ENCODE measurements at regions of chr7 and their contacts with region 1.

Region 1: DNA sequence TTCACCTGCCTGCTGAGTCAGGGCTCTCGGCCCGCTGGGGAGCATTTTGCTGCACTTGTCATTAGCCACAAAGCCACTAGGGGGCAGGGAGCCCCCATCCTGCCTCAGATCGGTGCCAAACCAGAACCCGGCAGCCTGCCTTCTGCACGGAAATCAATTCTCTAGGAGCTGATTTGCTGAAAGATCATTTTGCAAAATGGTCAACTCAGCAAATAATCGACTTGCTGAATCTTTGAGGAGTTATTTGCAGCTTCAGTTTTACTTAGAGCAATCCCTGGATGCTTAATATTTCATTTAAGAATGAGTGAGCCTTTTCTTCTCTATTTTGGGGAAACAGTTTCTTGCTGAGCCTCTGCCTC is 1.7 kb upstream of the GIMAP8 start:
- DNase-seq: peak; percentile 88 to 91 (median 89)
- H3K4me3 ChIP-seq: peak overlapping the region in 1 of 2 donors; percentile 36
- H3K4me3 Mint-ChIP-seq: peak overlapping the region; percentile 78 to 100 (median 100)
- H3K27ac ChIP-seq: peak overlapping the region; percentile 84
- H3K27ac Mint-ChIP-seq: peak overlapping the region; percentile 84 to 98 (median 96)
- H3K4me1 ChIP-seq: peaks cover 51% of the 10 kb centered on the region
- H3K4me1 Mint-ChIP-seq: peaks cover 34 to 64% (median 46%) of the 10 kb centered on the region in 4 donors
- H3K27me3 ChIP-seq: no peaks in the 10 kb centered on the region
- H3K27me3 Mint-ChIP-seq: no peaks in the 10 kb centered on the region

Region 2: GRCh38 chr7:150481186-150481920 is 32.6 kb after region 1 on chr7:
- CTCF ChIA-PET with region 1: interaction called, 47 read pairs
- POLR2A ChIA-PET with region 1: interaction called, 1,079 read pairs
- intact Hi-C with region 1: loop called (anchors 2 kb)
- DNase-seq: peak; percentile 63 to 87 (median 69)
- H3K4me3 ChIP-seq: peak overlapping the region in 1 of 2 donors; percentile 37
- H3K4me3 Mint-ChIP-seq: peak overlapping the region; percentile 80 to 90 (median 88)
- H3K27ac ChIP-seq: peak overlapping the region; percentile 71
- H3K27ac Mint-ChIP-seq: peak overlapping the region; percentile 96 to 100 (median 99)
- H3K4me1 ChIP-seq: peaks cover 99% of the 10 kb centered on the region
- H3K4me1 Mint-ChIP-seq: peaks cover 75 to 98% (median 91%) of the 10 kb centered on the region in 4 donors
- H3K27me3 ChIP-seq: no peaks in the 10 kb centered on the region
- H3K27me3 Mint-ChIP-seq: no peaks in the 10 kb centered on the region

Region 3: GRCh38 chr7:150556521-150557138 is 107.9 kb after region 1 on chr7:
- CTCF ChIA-PET with region 1: interaction called, 25 read pairs
- POLR2A ChIA-PET with region 1: interaction called, 68 read pairs
- intact Hi-C with region 1: no loop called
- DNase-seq: peak in 4 of 5 donors; percentile 53 to 76 (median 72)
- H3K4me3 ChIP-seq: peak overlapping the region in 1 of 2 donors; percentile 4
- H3K4me3 Mint-ChIP-seq: peak overlapping the region; percentile 34 to 87 (median 78)
- H3K27ac ChIP-seq: peak overlapping the region; percentile 40
- H3K27ac Mint-ChIP-seq: peak overlapping the region; percentile 79 to 96 (median 94)
- H3K4me1 ChIP-seq: peaks cover 64% of the 10 kb centered on the region
- H3K4me1 Mint-ChIP-seq: peaks cover 53 to 87% (median 72%) of the 10 kb centered on the region in 4 donors
- H3K27me3 ChIP-seq: no peaks in the 10 kb centered on the region
- H3K27me3 Mint-ChIP-seq: no peaks in the 10 kb centered on the region

Region 4: DNA sequence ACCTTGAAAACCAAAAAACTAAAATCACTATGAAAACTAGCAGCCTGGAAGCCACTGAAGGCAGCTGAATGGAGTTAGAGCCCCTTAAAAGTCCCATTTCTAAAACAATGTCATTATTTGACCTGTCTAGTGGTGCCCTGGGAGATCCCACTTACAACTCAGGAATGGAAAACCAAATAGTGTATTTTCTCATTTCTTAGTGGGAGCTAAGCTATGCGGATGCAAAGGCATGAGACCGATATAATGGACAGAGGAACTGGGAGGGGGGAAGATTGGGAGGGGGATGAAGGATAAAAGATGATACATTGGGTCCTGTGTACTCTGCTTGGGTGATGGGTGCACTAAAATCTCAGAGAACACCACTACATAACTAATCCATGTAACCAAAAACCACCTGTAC is 226.9 kb after region 1 on chr7:
- CTCF ChIA-PET with region 1: interaction called, 4 read pairs
- POLR2A ChIA-PET with region 1: interaction called, 43 read pairs
- intact Hi-C with region 1: loop called (anchors 2 kb)
- DNase-seq: no peak
- H3K4me3 ChIP-seq: no peak overlapping the region
- H3K4me3 Mint-ChIP-seq: peak overlapping the region; percentile 39 to 89 (median 61)
- H3K27ac ChIP-seq: peak overlapping the region; percentile 18
- H3K27ac Mint-ChIP-seq: peak overlapping the region; percentile 26 to 92 (median 86)
- H3K4me1 ChIP-seq: peaks cover 75% of the 10 kb centered on the region
- H3K4me1 Mint-ChIP-seq: peaks cover 55 to 87% (median 70%) of the 10 kb centered on the region in 4 donors
- H3K27me3 ChIP-seq: no peaks in the 10 kb centered on the region
- H3K27me3 Mint-ChIP-seq: no peaks in the 10 kb centered on the region

Region 5: GRCh38 chr7:150731916-150732315 is 283.1 kb after region 1 on chr7:
- CTCF ChIA-PET with region 1: interaction called, 15 read pairs
- POLR2A ChIA-PET with region 1: interaction called, 117 read pairs
- intact Hi-C with region 1: loop called (anchors 1 kb)
- DNase-seq: no peak
- H3K4me3 ChIP-seq: no peak overlapping the region
- H3K4me3 Mint-ChIP-seq: peak overlapping the region; percentile 9 to 95 (median 64)
- H3K27ac ChIP-seq: peak overlapping the region; percentile 6
- H3K27ac Mint-ChIP-seq: peak overlapping the region; percentile 86 to 97 (median 91)
- H3K4me1 ChIP-seq: peaks cover 76% of the 10 kb centered on the region
- H3K4me1 Mint-ChIP-seq: peaks cover 71 to 87% (median 76%) of the 10 kb centered on the region in 4 donors
- H3K27me3 ChIP-seq: no peaks in the 10 kb centered on the region
- H3K27me3 Mint-ChIP-seq: no peaks in the 10 kb centered on the region

Region 6: DNA sequence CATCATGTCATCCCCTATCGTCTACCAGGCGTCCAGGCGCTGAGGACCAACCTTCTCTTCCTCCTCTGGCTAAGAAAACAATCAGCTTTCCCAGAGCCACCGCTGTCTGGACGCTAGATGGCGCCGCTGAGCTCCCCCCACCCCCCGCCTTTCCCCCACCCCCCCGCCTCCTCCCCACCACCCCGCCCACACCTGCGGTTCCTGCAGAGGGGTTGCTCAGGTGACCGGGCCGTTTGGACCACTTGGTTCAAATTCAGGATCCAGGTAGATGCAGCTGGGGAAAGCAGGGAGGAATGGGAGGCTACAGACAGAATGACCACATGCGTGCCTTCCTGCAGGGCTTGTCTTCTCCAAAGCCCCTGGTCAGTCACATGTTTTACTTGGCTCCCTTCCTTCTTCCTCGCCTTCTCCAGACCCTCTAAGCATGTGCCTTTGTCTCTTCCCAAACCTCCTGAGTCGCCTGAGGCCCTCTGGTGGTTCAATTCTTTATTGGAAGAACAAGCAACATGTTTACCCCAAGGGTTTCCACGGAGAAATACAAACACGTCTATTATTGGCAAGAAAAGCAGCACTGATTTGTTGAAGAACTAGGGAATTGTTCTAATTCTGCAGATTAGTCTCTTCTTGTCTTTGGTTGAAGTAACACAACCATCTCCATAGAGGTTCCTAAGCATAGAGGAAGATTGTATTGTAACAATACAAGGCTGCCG is 428.2 kb after region 1 on chr7:
- CTCF ChIA-PET with region 1: interaction called, 6 read pairs
- POLR2A ChIA-PET with region 1: interaction called, 3 read pairs
- intact Hi-C with region 1: loop called (anchors 1 kb)
- DNase-seq: peak; percentile 42 to 70 (median 54)
- H3K4me3 ChIP-seq: no peak overlapping the region
- H3K4me3 Mint-ChIP-seq: peak overlapping the region; percentile 29 to 86 (median 48)
- H3K27ac ChIP-seq: no peak overlapping the region
- H3K27ac Mint-ChIP-seq: peak overlapping the region in 6 of 7 donors; percentile 44 to 93 (median 64)
- H3K4me1 ChIP-seq: peaks cover 12% of the 10 kb centered on the region
- H3K4me1 Mint-ChIP-seq: peaks cover 14 to 34% (median 20%) of the 10 kb centered on the region in 4 donors
- H3K27me3 ChIP-seq: no peaks in the 10 kb centered on the region
- H3K27me3 Mint-ChIP-seq: no peaks in the 10 kb centered on the region

Measured in CD4-positive, alpha-beta memory T cell (primary cell).